ENCODE measurements at regions of chr2 and their contacts with region 1.

Region 1: DNA sequence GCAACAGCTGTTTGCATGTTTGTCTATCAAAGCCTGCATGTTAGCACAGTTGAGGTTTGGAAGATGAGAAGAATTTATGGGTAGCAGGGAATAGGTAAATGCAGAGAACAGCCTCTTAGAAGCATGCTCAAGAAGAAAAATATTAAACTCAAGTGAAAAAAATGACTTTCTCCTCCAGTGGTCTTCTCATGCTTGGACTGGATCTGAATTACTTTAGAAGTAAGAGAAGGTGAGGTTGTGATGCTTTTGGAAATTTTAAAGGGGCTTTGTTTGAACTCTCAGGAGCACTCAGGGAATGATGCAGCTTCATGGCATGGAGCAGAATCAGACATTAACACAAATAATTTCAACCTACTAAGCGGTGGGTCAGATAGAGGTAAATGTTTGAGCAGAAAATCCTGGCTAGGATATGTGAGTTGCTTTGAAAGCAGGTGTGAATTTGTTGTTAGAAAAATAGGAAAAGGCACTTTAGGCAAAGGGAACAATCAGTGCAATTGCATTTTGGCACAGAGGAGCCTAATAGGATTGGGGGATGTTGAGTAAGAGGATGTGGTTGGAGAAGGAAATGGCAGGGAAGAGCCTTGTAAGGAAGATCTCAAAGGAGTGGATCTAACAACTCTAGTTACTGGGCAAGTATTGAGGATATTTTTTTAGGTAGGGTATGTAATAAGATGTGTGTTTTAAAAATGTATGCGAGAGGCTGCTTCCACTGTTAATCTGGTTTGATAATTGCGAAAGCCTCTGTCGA is 76.3 kb downstream of the DDX1 start:
- DNase-seq: no peak
- ATAC-seq: no peak
- H3K4me3 Mint-ChIP-seq: no peak overlapping the region
- H3K27ac Mint-ChIP-seq: no peak overlapping the region
- H3K4me1 Mint-ChIP-seq: peaks cover 11% of the 10 kb centered on the region
- H3K27me3 Mint-ChIP-seq: no peaks in the 10 kb centered on the region; the same call in 1 of the 2 replicates
- CTCF ChIP-seq: no peak

Region 2: GRCh38 chr2:15693926-15694588 is 26.1 kb after region 1 on chr2:
- CTCF ChIA-PET with region 1: interaction called, 13 read pairs
- POLR2A ChIA-PET with region 1: no interaction called
- DNase-seq: no peak
- ATAC-seq: peak; percentile 39; the same call in 1 of the 2 replicates
- H3K4me3 Mint-ChIP-seq: no peak overlapping the region
- H3K27ac Mint-ChIP-seq: no peak overlapping the region
- H3K4me1 Mint-ChIP-seq: peaks cover 7% of the 10 kb centered on the region; the same call in 1 of the 2 replicates
- H3K27me3 Mint-ChIP-seq: peaks cover 4% of the 10 kb centered on the region; the same call in 1 of the 2 replicates
- CTCF ChIP-seq: no peak

Region 3: DNA sequence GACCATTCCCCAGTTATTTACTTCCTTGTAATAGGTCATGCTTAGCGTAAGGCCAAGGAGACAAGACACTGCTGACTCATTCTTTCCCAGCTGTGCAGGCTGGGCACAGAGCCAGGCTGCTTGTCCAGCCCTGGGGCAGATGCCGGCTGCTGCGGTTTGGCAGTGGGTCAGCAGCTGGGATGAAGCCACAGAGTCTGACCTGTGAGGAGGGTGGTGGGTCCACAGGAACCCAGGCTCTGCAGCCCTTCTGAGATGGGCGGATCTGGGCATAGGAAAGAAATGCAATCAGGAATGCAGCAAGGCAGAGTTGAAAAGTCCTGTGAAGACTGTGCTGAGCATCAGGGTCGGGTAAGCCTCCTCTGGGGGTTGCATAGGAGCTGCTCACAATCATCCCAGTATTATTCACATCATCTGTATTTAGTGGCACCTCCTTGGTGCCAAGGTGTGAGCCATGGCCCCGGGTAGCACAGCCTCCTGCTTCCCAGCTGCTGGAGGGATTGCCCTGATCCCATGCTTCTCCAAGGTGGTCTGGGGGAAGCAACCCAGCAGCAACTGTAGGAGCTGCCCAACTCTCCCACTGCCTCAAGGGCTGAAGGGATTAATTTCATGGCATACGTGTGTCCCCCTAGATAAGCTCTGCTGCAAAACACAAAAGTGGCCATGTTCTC is 62.7 kb after region 1 on chr2:
- CTCF ChIA-PET with region 1: no interaction called
- POLR2A ChIA-PET with region 1: no interaction called
- DNase-seq: no peak
- ATAC-seq: no peak
- H3K4me3 Mint-ChIP-seq: no peak overlapping the region
- H3K27ac Mint-ChIP-seq: no peak overlapping the region
- H3K4me1 Mint-ChIP-seq: peaks cover 18% of the 10 kb centered on the region
- H3K27me3 Mint-ChIP-seq: no peaks in the 10 kb centered on the region; the same call in 1 of the 2 replicates
- CTCF ChIP-seq: no peak

Region 4: GRCh38 chr2:15776629-15776919 is 108.6 kb after region 1 on chr2:
- CTCF ChIA-PET with region 1: no interaction called
- POLR2A ChIA-PET with region 1: no interaction called
- DNase-seq: no peak
- ATAC-seq: no peak
- H3K4me3 Mint-ChIP-seq: no peak overlapping the region
- H3K27ac Mint-ChIP-seq: no peak overlapping the region
- H3K4me1 Mint-ChIP-seq: no peaks in the 10 kb centered on the region
- H3K27me3 Mint-ChIP-seq: no peaks in the 10 kb centered on the region
- CTCF ChIP-seq: no peak

Region 5: GRCh38 chr2:16160281-16161084 is 492.5 kb after region 1 on chr2:
- CTCF ChIA-PET with region 1: no interaction called
- POLR2A ChIA-PET with region 1: no interaction called
- DNase-seq: no peak
- ATAC-seq: no peak
- H3K4me3 Mint-ChIP-seq: no peak overlapping the region
- H3K27ac Mint-ChIP-seq: no peak overlapping the region
- H3K4me1 Mint-ChIP-seq: peaks cover 9% of the 10 kb centered on the region
- H3K27me3 Mint-ChIP-seq: no peaks in the 10 kb centered on the region
- CTCF ChIP-seq: no peak